Endothelial cell of umbilical vein (primary cell): ENCODE measurements at regions of chr3 and their contacts with region 1.

Region 1: GRCh38 chr3:197186887-197187588 is 111.4 kb downstream of the DLG1 start:
- DNase-seq: peak; percentile 71
- H3K4me3 ChIP-seq: no peak overlapping the region
- H3K27ac ChIP-seq: no peak overlapping the region
- H3K4me1 ChIP-seq: peaks cover 3% of the 10 kb centered on the region
- H3K27me3 ChIP-seq: no peaks in the 10 kb centered on the region
- CTCF ChIP-seq: peak; percentile 57 to 64
- POLR2A ChIP-seq: no peak

Region 2: GRCh38 chr3:196979545-196979944 is 207.5 kb before region 1 on chr3:
- CTCF ChIA-PET with region 1: interaction called, 4 read pairs
- POLR2A ChIA-PET with region 1: no interaction called
- dilution Hi-C with region 1: no loop called
- intact Hi-C with region 1: loop called (anchors 1 kb)
- DNase-seq: no peak
- H3K4me3 ChIP-seq: no peak overlapping the region
- H3K27ac ChIP-seq: no peak overlapping the region
- H3K4me1 ChIP-seq: no peaks in the 10 kb centered on the region
- H3K27me3 ChIP-seq: peaks cover 4 to 14% of the 10 kb centered on the region in 2 experiments
- CTCF ChIP-seq: no peak
- POLR2A ChIP-seq: no peak

Region 3: DNA sequence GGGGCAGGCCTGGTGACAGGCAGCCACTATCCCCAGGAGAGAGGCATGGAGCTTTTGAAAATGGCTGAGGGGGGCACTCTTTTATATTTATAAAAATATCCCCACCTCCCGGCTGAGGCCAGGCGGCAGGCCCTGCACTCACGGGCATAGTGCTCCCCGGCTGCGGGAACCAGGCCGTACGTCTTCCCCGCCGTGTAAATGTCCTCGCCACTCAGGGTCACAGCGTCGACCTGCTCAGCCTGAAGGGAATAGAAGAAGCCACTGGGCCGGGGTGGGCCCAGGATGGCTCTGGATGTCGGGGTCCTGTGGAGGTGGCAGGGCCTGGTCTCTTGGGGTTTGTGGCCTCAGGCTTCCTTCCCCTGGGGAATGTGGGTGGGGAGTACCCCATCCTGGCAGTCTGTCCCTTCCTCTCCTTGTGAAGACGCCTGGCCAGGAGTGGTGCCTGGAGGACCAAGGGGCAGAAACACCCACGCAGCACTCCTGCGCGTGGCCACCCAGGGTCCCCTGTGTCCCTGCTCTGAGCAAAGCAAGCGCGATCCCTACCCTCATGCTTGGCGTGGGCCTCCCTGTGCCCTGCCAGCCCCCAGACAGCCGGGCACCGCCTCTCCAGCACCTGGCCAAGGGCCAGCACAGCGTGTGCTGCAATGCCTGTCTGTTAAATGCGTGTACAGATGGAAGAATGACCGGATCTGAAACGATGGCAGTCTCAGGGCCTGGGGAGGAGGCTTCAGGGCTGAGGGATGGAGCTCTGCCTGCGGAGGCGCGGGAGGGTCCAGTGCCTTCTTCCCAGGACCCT is 176.3 kb before region 1 on chr3:
- CTCF ChIA-PET with region 1: no interaction called
- POLR2A ChIA-PET with region 1: no interaction called
- dilution Hi-C with region 1: no loop called
- intact Hi-C with region 1: no loop called
- DNase-seq: no peak
- H3K4me3 ChIP-seq: no peak overlapping the region
- H3K27ac ChIP-seq: no peak overlapping the region
- H3K4me1 ChIP-seq: no peaks in the 10 kb centered on the region
- H3K27me3 ChIP-seq: no peaks in the 10 kb centered on the region
- CTCF ChIP-seq: no peak
- POLR2A ChIP-seq: no peak

Region 4: DNA sequence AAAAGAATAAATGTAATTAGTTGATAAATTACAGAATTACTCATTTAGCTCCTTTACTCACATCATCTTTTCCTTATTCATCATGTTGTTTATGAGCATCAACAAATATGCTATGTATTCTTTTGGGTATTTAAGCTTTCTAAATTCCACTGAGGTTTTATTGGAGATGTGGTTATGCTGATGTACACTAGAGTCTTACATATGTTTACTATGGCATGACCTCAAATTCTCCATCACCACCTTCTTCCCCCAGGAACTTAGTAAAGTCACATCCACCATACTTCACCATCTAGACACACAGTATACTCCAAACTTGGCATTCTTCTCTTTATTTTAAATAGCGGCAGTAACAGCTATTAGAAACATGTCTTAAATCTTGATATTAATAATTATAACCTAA is 83.3 kb before region 1 on chr3:
- CTCF ChIA-PET with region 1: interaction called, 10 read pairs
- POLR2A ChIA-PET with region 1: no interaction called
- dilution Hi-C with region 1: no loop called
- intact Hi-C with region 1: no loop called
- DNase-seq: no peak
- H3K4me3 ChIP-seq: no peak overlapping the region
- H3K27ac ChIP-seq: no peak overlapping the region
- H3K4me1 ChIP-seq: no peaks in the 10 kb centered on the region
- H3K27me3 ChIP-seq: no peaks in the 10 kb centered on the region
- CTCF ChIP-seq: no peak
- POLR2A ChIP-seq: no peak

Region 5: GRCh38 chr3:197203714-197204146 is 16.7 kb after region 1 on chr3:
- CTCF ChIA-PET with region 1: interaction called, 19 read pairs
- POLR2A ChIA-PET with region 1: no interaction called
- dilution Hi-C with region 1: no loop called
- intact Hi-C with region 1: no loop called
- DNase-seq: no peak
- H3K4me3 ChIP-seq: no peak overlapping the region
- H3K27ac ChIP-seq: no peak overlapping the region
- H3K4me1 ChIP-seq: peaks cover 11% of the 10 kb centered on the region
- H3K27me3 ChIP-seq: no peaks in the 10 kb centered on the region
- CTCF ChIP-seq: no peak
- POLR2A ChIP-seq: no peak